ENCODE measurements at regions of chr5 and their contacts with region 1.

Region 1: DNA sequence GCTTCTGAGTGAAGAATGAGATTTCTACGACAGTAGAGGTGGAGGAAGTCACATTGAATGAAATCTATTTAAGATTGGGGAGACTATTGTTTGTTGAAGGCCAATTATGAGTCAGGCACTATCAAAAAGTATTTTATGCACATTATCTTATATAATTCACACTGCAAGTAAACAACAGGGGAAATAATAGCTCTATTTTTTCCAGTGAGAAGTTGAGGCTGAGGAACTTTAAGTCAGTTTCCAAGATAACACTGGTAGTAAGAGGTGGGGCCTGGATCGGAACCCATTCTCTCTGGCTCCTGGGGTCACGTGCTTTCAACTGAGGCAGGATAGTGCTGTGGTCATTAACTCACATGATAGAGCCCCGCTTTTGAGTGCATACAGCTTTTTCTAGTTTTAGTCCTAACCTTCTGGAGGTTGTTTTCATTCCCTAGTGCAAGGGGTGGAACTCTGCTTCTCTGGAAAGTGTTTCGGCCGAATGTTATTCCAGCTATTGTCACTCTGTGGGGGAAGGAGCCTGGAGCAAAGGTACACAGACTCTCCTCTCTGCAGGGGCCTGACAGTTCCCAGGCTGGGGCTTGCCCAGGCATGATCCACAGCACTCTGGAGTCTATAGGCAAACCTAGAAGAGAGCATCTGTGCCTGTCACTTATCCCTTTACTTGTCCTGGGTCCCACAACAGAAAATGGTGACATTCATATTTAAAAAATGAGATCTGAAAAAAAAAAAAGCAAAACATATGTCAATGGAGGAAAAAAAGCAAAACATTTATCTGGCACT is 352.4 kb upstream of the ACTBL2 start:
- DNase-seq: no peak
- H3K4me3 Mint-ChIP-seq: no peak overlapping the region
- H3K27ac Mint-ChIP-seq: peak overlapping the region; percentile 46
- H3K4me1 Mint-ChIP-seq: peaks cover 45% of the 10 kb centered on the region
- H3K27me3 Mint-ChIP-seq: no peaks in the 10 kb centered on the region
- CTCF ChIP-seq: no peak

Region 2: GRCh38 chr5:57692582-57693487 is 142.2 kb before region 1 on chr5:
- CTCF ChIA-PET with region 1: no interaction called
- intact Hi-C with region 1: loop called (anchors 5 kb)
- DNase-seq: peak; percentile 86
- H3K4me3 Mint-ChIP-seq: peak overlapping the region; percentile 71
- H3K27ac Mint-ChIP-seq: peak overlapping the region; percentile 98
- H3K4me1 Mint-ChIP-seq: peaks cover 51% of the 10 kb centered on the region
- H3K27me3 Mint-ChIP-seq: no peaks in the 10 kb centered on the region
- CTCF ChIP-seq: no peak

Region 3: GRCh38 chr5:57791875-57792274 is 43.1 kb before region 1 on chr5:
- CTCF ChIA-PET with region 1: no interaction called
- intact Hi-C with region 1: no loop called
- DNase-seq: no peak
- H3K4me3 Mint-ChIP-seq: no peak overlapping the region
- H3K27ac Mint-ChIP-seq: no peak overlapping the region
- H3K4me1 Mint-ChIP-seq: no peaks in the 10 kb centered on the region
- H3K27me3 Mint-ChIP-seq: no peaks in the 10 kb centered on the region
- CTCF ChIP-seq: no peak

Region 4: DNA sequence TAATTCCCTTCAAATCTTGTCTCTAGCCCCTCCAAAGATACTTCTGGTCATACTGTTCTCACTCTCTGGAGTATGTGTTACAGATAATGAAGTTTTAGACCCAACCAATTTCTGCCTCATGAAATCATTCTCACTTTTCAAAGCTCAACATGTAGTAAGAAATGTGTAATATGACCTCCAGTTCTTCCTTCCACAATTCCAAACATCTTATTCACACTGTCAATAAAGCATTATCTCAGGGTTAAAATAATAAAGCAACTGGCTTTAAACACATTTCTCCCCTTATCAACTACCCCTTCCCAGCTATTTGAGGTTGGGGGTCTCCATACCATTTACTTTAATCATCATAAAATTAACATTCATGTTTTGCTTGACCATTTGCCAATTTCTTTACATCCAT is 1402.0 kb after region 1 on chr5:
- CTCF ChIA-PET with region 1: interaction called, 10 read pairs
- intact Hi-C with region 1: no loop called
- DNase-seq: no peak
- H3K4me3 Mint-ChIP-seq: no peak overlapping the region
- H3K27ac Mint-ChIP-seq: peak overlapping the region; percentile 28
- H3K4me1 Mint-ChIP-seq: peaks cover 29% of the 10 kb centered on the region
- H3K27me3 Mint-ChIP-seq: no peaks in the 10 kb centered on the region
- CTCF ChIP-seq: no peak